B cell (primary cell): ENCODE measurements at regions of chr4 and their contacts with region 1.

Region 1: GRCh38 chr4:77618383-77619122 is 12.9 kb downstream of the CXCL13 start:
- DNase-seq: peak; percentile 65
- ATAC-seq: peak; percentile 69
- H3K4me3 ChIP-seq: no peak overlapping the region
- H3K4me3 Mint-ChIP-seq: no peak overlapping the region
- H3K27ac ChIP-seq: no peak overlapping the region
- H3K27ac Mint-ChIP-seq: no peak overlapping the region
- H3K4me1 ChIP-seq: peaks cover 0 to 3% of the 10 kb centered on the region in 2 donors
- H3K4me1 Mint-ChIP-seq: peaks cover 4% of the 10 kb centered on the region
- H3K27me3 ChIP-seq: no peaks in the 10 kb centered on the region
- H3K27me3 Mint-ChIP-seq: peaks cover 9% of the 10 kb centered on the region
- CTCF ChIP-seq: peak; percentile 93

Region 2: DNA sequence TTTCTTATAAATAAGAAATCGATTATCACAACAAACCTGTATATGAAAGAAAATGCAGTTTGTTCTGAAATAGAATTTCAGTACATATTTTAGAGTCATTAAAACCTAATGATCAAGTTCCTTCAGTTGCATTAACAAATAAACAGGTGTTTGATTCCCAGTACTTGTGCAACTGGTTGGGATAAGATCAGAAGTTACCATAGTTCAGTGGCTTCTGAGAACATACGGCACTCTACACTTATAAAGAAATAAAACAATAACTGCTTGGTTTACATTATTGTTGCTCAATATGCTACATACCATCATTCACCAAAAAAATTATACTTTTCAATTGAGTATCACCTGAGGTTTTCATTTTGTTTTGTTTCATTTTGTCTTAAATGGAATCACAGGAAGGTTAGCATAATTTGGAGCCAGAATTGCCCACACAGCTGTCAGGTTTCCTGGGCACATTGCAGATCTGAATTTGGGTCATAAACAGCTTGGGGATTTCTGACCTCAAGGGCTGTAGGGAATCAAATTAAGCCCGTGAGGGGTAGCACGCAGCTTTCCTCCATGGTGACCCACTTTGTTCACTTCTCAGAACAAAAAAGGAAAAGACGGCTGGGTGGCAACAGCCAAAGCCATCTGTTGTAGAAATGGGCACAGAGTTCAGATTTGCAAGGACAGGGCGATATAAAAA is 476.4 kb before region 1 on chr4:
- CTCF ChIA-PET with region 1: no interaction called
- POLR2A ChIA-PET with region 1: no interaction called
- intact Hi-C with region 1: no loop called
- DNase-seq: no peak
- ATAC-seq: no peak
- H3K4me3 ChIP-seq: no peak overlapping the region
- H3K4me3 Mint-ChIP-seq: no peak overlapping the region
- H3K27ac ChIP-seq: no peak overlapping the region
- H3K27ac Mint-ChIP-seq: no peak overlapping the region
- H3K4me1 ChIP-seq: peaks cover 21 to 26% of the 10 kb centered on the region in 2 donors
- H3K4me1 Mint-ChIP-seq: peaks cover 24% of the 10 kb centered on the region
- H3K27me3 ChIP-seq: no peaks in the 10 kb centered on the region
- H3K27me3 Mint-ChIP-seq: no peaks in the 10 kb centered on the region
- CTCF ChIP-seq: no peak

Region 3: GRCh38 chr4:77332696-77333270 is 285.8 kb before region 1 on chr4:
- CTCF ChIA-PET with region 1: no interaction called
- POLR2A ChIA-PET with region 1: no interaction called
- intact Hi-C with region 1: no loop called
- DNase-seq: no peak
- ATAC-seq: no peak
- H3K4me3 ChIP-seq: no peak overlapping the region
- H3K4me3 Mint-ChIP-seq: no peak overlapping the region
- H3K27ac ChIP-seq: no peak overlapping the region
- H3K27ac Mint-ChIP-seq: no peak overlapping the region
- H3K4me1 ChIP-seq: no peaks in the 10 kb centered on the region
- H3K4me1 Mint-ChIP-seq: no peaks in the 10 kb centered on the region
- H3K27me3 ChIP-seq: peaks cover 0 to 5% (median 0%) of the 10 kb centered on the region in 4 experiments
- H3K27me3 Mint-ChIP-seq: peaks cover under 1% of the 10 kb centered on the region
- CTCF ChIP-seq: no peak

Region 4: DNA sequence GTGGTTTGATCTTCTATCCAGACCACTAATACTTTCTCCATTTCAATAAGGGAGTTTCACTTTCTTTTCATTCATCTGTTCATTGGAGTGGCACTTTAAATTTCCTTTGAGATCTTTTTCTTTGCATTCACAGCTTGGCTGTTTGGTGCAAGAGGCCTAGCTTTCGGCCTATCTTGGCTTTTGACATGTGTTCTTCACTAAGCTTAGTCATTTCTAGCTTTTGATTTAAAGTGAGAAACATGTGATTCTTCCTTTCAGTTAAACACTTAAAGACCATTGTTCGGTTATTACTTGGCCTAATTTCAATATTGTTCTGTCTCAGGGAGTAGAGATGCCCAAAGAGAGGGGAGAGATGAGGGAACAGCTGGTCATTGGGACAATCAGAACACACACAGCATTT is 11.3 kb after region 1 on chr4:
- CTCF ChIA-PET with region 1: interaction called, 10 read pairs
- POLR2A ChIA-PET with region 1: no interaction called
- intact Hi-C with region 1: no loop called
- DNase-seq: no peak
- ATAC-seq: no peak
- H3K4me3 ChIP-seq: no peak overlapping the region
- H3K4me3 Mint-ChIP-seq: no peak overlapping the region
- H3K27ac ChIP-seq: no peak overlapping the region
- H3K27ac Mint-ChIP-seq: no peak overlapping the region
- H3K4me1 ChIP-seq: no peaks in the 10 kb centered on the region
- H3K4me1 Mint-ChIP-seq: peaks cover 7% of the 10 kb centered on the region
- H3K27me3 ChIP-seq: no peaks in the 10 kb centered on the region
- H3K27me3 Mint-ChIP-seq: no peaks in the 10 kb centered on the region
- CTCF ChIP-seq: no peak

Region 5: GRCh38 chr4:77762531-77762930 is 144.0 kb after region 1 on chr4:
- CTCF ChIA-PET with region 1: no interaction called
- POLR2A ChIA-PET with region 1: no interaction called
- intact Hi-C with region 1: no loop called
- DNase-seq: no peak
- ATAC-seq: no peak
- H3K4me3 ChIP-seq: no peak overlapping the region
- H3K4me3 Mint-ChIP-seq: no peak overlapping the region
- H3K27ac ChIP-seq: no peak overlapping the region
- H3K27ac Mint-ChIP-seq: no peak overlapping the region
- H3K4me1 ChIP-seq: no peaks in the 10 kb centered on the region
- H3K4me1 Mint-ChIP-seq: no peaks in the 10 kb centered on the region
- H3K27me3 ChIP-seq: no peaks in the 10 kb centered on the region
- H3K27me3 Mint-ChIP-seq: no peaks in the 10 kb centered on the region
- CTCF ChIP-seq: no peak